Posterior cingulate gyrus (tissue), 11 donors: ENCODE measurements at regions of chr19 and their contacts with region 1.

Region 1: GRCh38 chr19:36054119-36054732 is at the start of gene THAP8:
- DNase-seq: peak; percentile 98 to 100 (median 99)

Region 2: DNA sequence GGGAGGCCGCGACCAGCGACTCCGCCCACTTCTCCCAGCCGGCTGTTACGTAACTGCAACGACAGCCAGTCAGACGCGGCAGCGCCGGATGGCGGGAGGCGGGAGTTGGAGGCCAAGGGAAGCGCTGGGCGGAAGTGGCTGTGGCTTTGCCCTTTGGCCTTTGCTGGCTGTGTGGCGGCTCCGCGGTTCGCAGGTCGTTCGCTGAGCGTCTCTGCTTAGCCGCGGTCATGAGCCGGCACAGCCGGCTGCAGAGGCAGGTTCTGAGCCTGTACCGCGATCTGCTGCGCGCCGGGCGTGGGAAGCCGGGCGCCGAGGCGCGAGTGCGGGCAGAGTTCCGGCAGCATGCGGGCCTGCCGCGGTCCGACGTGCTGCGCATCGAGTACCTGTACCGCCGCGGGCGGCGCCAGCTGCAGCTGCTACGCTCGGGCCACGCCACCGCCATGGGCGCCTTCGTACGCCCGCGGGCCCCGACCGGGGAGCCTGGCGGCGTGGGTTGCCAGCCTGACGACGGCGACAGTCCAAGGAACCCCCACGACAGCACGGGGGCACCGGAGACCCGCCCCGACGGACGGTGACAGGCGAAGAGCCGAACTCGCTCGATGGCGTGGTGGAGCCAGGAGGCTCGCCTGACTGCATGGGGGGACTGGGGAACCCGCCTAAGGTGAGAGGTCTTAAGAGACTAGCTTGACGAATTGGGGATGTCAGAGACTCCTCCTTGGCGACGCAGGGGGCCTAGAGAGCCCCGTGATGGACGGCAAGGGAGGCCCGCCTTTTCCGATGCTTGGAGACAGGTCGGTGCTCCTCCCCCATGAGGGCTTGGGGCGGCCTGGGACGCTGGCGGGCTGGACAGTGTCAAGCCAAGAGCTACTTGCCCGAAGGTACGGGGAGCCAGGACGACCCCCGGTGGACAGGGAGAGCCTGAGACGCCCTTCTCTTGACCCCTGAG is 58.9 kb before region 1 on chr19 and contains the start of gene SDHAF1:
- intact Hi-C with region 1: loop called (anchors 5 kb)
- DNase-seq: peak; percentile 96 to 100 (median 98)

Region 3: GRCh38 chr19:36073121-36073872 is 19.1 kb after region 1 on chr19:
- intact Hi-C with region 1: no loop called
- DNase-seq: peak in 1 of 10 donors; percentile 24

Region 4: GRCh38 chr19:36139473-36140303 is 85.5 kb after region 1 on chr19 and contains the start of gene CAPNS1:
- intact Hi-C with region 1: no loop called
- DNase-seq: peak; percentile 96 to 100 (median 98)